GM12878 (cell line): ENCODE measurements at regions of chr3 and their contacts with region 1.

Region 1: GRCh38 chr3:182524740-182525407 is 268.4 kb upstream of the ATP11B start:
- DNase-seq: no peak
- ATAC-seq: no peak
- H3K4me3 ChIP-seq: no peak overlapping the region
- H3K27ac ChIP-seq: no peak overlapping the region
- H3K4me1 ChIP-seq: no peaks in the 10 kb centered on the region
- H3K27me3 ChIP-seq: peaks cover 1 to 2% of the 10 kb centered on the region in 2 experiments; a peak in 2 of 4 replicates
- CTCF ChIP-seq: no peak
- EP300 ChIP-seq: no peak
- POLR2A ChIP-seq: no peak
- RAD21 ChIP-seq: no peak

Region 2: GRCh38 chr3:182508916-182509711 is 15.8 kb before region 1 on chr3:
- CTCF ChIA-PET with region 1: interaction called, 8 read pairs
- POLR2A ChIA-PET with region 1: interaction called, 3 read pairs
- RAD21 ChIA-PET with region 1: interaction called, 3 read pairs
- SMC1A ChIA-PET with region 1: interaction called, 95 read pairs
- in situ Hi-C with region 1: no loop called
- intact Hi-C with region 1: no loop called
- DNase-seq: no peak
- ATAC-seq: peak; percentile 34; the same call in 1 of the 3 replicates
- H3K4me3 ChIP-seq: no peak overlapping the region
- H3K27ac ChIP-seq: no peak overlapping the region
- H3K4me1 ChIP-seq: no peaks in the 10 kb centered on the region
- H3K27me3 ChIP-seq: no peaks in the 10 kb centered on the region; a peak in 1 of 4 replicates
- CTCF ChIP-seq: no peak
- EP300 ChIP-seq: no peak
- POLR2A ChIP-seq: no peak
- RAD21 ChIP-seq: no peak

Region 3: DNA sequence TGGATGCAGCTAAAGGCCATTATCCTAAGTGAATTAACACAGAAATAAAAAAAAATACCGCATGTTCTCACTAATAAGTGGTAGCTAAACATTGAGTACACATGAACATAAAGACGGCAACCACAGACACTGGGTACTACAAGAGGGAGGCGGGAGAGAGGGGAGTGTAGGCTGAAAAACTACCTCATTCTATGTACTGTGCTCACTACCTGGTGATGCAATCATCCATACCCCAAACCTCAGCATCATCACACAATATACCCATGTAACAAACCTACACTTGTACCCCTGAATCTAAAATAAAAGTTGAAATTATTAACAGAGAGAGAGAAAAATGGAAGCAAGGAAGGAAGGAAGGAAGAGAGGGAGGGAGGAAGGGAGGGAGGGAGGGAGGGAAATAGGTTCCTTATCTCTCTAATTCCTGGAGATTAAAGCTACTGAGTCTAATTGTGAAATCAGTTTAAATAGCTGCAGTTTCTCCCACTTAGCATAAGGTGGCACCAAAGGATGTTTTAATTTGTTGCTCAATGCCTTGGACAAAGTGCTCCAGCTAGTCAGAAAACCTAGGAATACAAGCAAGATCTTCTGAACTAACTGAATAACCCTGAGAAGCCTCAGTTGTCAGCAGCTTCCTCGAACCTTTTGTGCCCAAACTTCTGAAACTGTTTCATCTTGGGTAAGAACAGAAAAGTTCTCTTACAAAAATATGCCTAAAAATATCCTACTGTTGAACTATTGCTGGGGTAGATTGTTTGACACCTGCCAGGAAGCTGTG is 189.1 kb after region 1 on chr3:
- CTCF ChIA-PET with region 1: no interaction called
- POLR2A ChIA-PET with region 1: no interaction called
- RAD21 ChIA-PET with region 1: no interaction called
- SMC1A ChIA-PET with region 1: no interaction called
- in situ Hi-C with region 1: no loop called
- intact Hi-C with region 1: no loop called
- DNase-seq: peak; percentile 49
- ATAC-seq: peak; percentile 48
- H3K4me3 ChIP-seq: no peak overlapping the region
- H3K27ac ChIP-seq: no peak overlapping the region; the same call in 1 of the 2 replicates
- H3K4me1 ChIP-seq: peaks cover 35% of the 10 kb centered on the region
- H3K27me3 ChIP-seq: no peaks in the 10 kb centered on the region
- CTCF ChIP-seq: peak; percentile 51 to 81 (median 64); a peak in 5 of 6 replicates
- EP300 ChIP-seq: no peak
- POLR2A ChIP-seq: no peak
- RAD21 ChIP-seq: peak; percentile 89